Ovary (tissue), 10 donors: ENCODE measurements at regions of chr5 and their contacts with region 1.

Region 1: DNA sequence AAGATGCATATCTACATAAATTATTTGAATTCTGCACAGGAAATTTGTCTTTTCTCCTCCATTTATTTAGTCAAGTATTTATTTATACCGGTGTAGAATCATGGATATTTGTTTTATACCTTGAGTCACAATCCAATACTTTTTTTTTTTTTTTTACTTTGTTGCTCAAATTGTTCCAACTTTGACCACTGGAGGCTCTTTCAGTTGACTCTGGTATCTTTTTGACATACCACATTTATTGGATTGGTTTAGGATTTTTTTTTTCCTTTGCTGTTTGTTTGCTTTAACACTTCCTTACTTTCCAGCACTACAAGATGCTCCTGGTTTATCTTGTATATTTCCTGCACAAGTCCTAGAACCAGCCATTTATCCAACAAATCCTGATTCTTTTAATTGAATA is 543.1 kb upstream of the RIOK2 start:
- DNase-seq: no peak
- H3K4me3 ChIP-seq: no peak overlapping the region
- H3K27ac ChIP-seq: no peak overlapping the region
- H3K4me1 ChIP-seq: no peaks in the 10 kb centered on the region
- H3K27me3 ChIP-seq: no peaks in the 10 kb centered on the region
- CTCF ChIP-seq: no peak
- EP300 ChIP-seq: no peak
- POLR2A ChIP-seq: no peak

Region 2: DNA sequence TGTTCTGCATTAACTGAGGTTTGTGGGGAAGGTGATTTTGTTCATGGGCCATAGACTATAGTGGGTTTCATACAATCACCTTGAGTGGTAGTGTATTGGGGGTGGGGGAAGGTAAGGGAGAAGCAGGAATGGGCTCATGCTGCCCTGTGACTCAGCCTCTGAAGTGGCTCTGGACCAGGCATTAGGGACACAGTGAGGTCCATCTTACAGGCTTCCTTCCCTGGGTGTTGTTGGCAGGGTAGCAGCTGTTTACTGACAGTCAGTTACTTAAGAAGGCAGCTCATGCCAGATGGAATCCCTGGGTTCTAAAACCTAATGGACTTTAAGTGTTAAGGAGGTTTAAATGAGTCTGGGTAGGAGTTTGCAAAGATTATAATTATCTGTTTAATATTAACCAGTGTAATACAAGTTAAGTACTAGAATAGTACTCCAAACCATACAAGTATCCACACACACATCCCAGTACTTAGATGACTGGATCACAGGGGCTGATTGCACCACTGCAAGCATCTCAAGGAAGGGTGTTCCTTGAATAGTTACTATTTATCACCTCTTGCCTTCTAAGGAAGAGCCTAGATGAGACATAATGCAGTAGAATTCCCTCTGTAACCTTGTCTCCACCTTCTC is 1004.6 kb before region 1 on chr5:
- intact Hi-C with region 1: loop called in 1 of 4 experiments (anchors 5 kb)
- DNase-seq: no peak
- H3K4me3 ChIP-seq: no peak overlapping the region
- H3K27ac ChIP-seq: no peak overlapping the region
- H3K4me1 ChIP-seq: peaks cover 2% of the 10 kb centered on the region
- H3K27me3 ChIP-seq: no peaks in the 10 kb centered on the region
- CTCF ChIP-seq: no peak
- EP300 ChIP-seq: no peak
- POLR2A ChIP-seq: no peak

Region 3: DNA sequence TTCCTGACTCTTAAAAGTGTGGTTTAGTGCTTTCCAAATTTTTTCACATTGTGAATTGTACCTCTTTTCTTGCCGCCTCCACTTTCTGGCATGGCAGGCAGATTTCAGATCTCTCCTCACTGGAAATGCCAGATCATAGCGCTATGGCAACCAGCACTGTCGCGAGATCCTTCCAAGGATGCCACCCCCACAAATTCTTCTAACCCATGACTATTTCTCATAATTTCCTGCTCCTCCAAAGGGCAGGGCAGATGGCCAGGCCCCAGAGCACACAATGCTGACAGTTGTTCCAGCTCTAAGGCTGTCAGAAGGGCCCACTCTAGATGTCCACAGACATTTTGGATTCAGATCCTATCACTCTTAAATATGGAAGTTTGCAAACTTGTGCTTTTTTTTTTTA is 96.8 kb before region 1 on chr5:
- intact Hi-C with region 1: no loop called
- DNase-seq: peak; percentile 11 to 38 (median 23)
- H3K4me3 ChIP-seq: no peak overlapping the region
- H3K27ac ChIP-seq: no peak overlapping the region
- H3K4me1 ChIP-seq: no peaks in the 10 kb centered on the region
- H3K27me3 ChIP-seq: no peaks in the 10 kb centered on the region
- CTCF ChIP-seq: no peak
- EP300 ChIP-seq: no peak
- POLR2A ChIP-seq: no peak